ENCODE measurements at regions of chr5 and their contacts with region 1.

Region 1: GRCh38 chr5:107719034-107719606 is 48.4 kb upstream of the EFNA5 start:
- DNase-seq: no peak
- H3K4me3 ChIP-seq: no peak overlapping the region
- H3K27ac ChIP-seq: no peak overlapping the region
- H3K4me1 ChIP-seq: no peaks in the 10 kb centered on the region
- H3K27me3 ChIP-seq: no peaks in the 10 kb centered on the region
- CTCF ChIP-seq: no peak
- POLR2A ChIP-seq: no peak

Region 2: GRCh38 chr5:107705402-107706014 is 13.6 kb before region 1 on chr5:
- CTCF ChIA-PET with region 1: no interaction called
- POLR2A ChIA-PET with region 1: no interaction called
- dilution Hi-C with region 1: no loop called
- intact Hi-C with region 1: no loop called
- DNase-seq: peak; percentile 52
- H3K4me3 ChIP-seq: peak overlapping the region; percentile 25 to 52 (median 48)
- H3K27ac ChIP-seq: no peak overlapping the region
- H3K4me1 ChIP-seq: peaks cover 8% of the 10 kb centered on the region
- H3K27me3 ChIP-seq: no peaks in the 10 kb centered on the region
- CTCF ChIP-seq: no peak
- POLR2A ChIP-seq: no peak

Region 3: DNA sequence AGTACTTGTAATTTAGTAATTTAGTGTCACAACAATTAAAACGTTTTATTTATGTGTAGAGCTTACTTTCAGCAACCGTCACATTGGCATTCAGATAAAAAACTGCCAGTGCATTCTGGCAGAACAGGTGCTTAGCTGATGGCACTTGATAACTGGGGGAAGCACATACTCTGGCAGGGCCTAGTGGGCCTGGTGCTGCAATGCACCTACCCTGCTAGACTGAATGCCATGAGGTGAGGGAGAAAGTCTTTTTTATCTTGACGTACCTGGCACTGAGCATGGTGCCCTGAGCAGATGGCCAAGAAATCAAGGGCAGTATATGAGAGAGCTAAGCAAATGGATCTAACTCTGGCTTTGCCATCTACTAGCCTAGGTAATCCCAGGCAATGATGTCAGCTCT is 232.2 kb after region 1 on chr5:
- CTCF ChIA-PET with region 1: no interaction called
- POLR2A ChIA-PET with region 1: no interaction called
- dilution Hi-C with region 1: no loop called
- intact Hi-C with region 1: loop called (anchors 10 kb)
- DNase-seq: no peak
- H3K4me3 ChIP-seq: no peak overlapping the region
- H3K27ac ChIP-seq: no peak overlapping the region
- H3K4me1 ChIP-seq: no peaks in the 10 kb centered on the region
- H3K27me3 ChIP-seq: no peaks in the 10 kb centered on the region
- CTCF ChIP-seq: no peak
- POLR2A ChIP-seq: no peak

Measured in endothelial cell of umbilical vein (primary cell).